Calu3 (cell line): ENCODE measurements at regions of chr1 and their contacts with region 1.

Region 1: DNA sequence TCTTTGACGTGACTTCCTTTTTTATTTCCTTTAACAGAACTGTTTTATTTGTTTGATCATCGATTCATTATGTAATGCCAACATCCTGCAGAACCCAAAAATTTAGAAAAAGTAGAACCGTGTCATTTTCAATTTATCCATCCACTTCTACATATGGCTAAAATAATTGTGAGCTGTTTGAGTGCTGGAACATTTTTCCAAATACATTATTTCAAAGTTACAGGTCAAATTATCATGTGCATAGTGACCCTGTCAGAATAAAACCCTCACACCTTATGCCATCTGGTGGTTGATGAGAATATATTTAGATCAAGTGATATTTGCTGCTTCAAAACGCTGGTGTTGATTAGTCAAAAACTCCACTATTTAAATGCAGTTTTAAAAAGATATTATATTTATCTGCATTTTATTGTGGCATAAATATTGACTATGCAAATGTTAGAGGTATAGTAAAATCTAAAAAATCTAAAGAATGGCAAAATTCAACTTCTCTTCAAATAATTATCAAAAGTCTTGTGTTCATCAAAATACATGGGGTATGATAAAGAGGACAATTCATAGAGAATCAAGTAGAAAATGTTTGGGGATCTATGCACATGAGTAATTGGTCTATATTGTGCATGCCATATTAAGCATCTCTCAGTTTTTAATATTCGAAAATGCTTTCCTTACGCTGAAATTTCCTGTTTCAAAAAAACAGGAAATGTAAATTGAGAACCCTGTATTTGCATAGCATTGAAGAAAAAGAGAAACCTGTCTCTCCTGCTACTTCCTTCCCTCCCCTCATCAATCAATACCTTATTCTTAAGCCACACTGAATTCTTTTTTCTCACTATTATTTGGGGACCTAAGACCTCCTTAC is 39.7 kb downstream of the UBE2U start:
- DNase-seq: no peak
- H3K4me3 Mint-ChIP-seq: peak overlapping the region; percentile 12
- H3K27ac Mint-ChIP-seq: peak overlapping the region; percentile 18
- H3K4me1 Mint-ChIP-seq: peaks cover 20% of the 10 kb centered on the region
- H3K27me3 Mint-ChIP-seq: no peaks in the 10 kb centered on the region
- CTCF ChIP-seq: peak; percentile 41

Region 2: DNA sequence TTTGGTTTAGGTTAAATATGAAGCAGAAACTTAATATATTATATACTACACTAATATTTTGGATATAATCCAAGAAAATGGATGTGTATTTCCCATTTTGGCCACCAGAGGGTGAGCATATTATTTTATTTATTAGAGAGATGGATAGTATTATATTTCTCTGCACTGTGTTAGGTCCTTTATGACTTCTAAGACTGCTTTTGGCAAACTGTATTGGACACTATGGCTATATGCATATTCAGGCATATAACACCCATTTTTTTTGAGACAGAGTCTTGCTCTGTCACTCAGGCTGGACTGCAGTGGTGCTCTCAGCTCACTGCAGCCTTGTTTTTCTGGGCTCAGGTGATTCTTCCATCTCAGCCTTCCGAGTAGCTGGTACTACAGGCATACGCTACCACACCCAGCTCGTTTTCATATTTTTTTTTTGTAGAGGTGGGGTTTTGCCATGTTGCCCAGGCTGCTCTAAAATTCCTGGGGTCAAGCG is 667.7 kb before region 1 on chr1:
- CTCF ChIA-PET with region 1: interaction called, 5 read pairs
- intact Hi-C with region 1: loop called (anchors 1 kb)
- DNase-seq: peak; percentile 35
- H3K4me3 Mint-ChIP-seq: no peak overlapping the region
- H3K27ac Mint-ChIP-seq: no peak overlapping the region
- H3K4me1 Mint-ChIP-seq: no peaks in the 10 kb centered on the region
- H3K27me3 Mint-ChIP-seq: no peaks in the 10 kb centered on the region
- CTCF ChIP-seq: peak; percentile 51

Region 3: DNA sequence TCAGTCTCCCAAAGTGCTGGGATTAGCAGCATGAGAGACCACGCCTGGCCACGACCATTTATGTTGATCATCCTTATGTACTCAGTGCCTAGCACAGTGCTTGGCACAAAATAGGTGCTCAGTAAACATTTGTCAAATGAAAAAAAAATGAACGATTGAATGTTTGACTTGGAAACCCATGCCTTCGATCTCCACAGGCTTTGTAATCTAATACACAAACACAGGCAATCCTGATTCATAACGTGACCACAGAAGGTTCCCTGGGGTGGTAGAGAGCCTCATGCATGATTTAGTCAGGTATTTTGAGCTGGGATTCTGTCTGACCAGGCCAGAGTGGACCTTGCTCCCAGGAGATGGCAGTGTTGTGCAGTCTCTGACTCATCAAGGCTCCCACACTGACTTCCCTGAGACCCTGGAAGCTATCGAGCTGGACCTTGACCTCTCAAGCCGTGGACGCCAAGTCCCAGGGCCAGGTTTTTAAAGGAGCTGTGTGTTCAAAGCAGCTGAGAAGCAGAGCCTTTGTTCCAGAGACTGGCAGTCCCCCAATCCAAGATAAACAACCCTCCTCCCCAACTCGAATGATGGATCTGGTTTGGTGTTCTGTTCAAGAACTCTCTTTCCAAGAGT is 568.8 kb before region 1 on chr1:
- CTCF ChIA-PET with region 1: interaction called, 7 read pairs
- intact Hi-C with region 1: loop called (anchors 1 kb)
- DNase-seq: peak; percentile 89
- H3K4me3 Mint-ChIP-seq: peak overlapping the region; percentile 2
- H3K27ac Mint-ChIP-seq: peak overlapping the region; percentile 62
- H3K4me1 Mint-ChIP-seq: peaks cover 53% of the 10 kb centered on the region
- H3K27me3 Mint-ChIP-seq: no peaks in the 10 kb centered on the region
- CTCF ChIP-seq: peak; percentile 69

Region 4: DNA sequence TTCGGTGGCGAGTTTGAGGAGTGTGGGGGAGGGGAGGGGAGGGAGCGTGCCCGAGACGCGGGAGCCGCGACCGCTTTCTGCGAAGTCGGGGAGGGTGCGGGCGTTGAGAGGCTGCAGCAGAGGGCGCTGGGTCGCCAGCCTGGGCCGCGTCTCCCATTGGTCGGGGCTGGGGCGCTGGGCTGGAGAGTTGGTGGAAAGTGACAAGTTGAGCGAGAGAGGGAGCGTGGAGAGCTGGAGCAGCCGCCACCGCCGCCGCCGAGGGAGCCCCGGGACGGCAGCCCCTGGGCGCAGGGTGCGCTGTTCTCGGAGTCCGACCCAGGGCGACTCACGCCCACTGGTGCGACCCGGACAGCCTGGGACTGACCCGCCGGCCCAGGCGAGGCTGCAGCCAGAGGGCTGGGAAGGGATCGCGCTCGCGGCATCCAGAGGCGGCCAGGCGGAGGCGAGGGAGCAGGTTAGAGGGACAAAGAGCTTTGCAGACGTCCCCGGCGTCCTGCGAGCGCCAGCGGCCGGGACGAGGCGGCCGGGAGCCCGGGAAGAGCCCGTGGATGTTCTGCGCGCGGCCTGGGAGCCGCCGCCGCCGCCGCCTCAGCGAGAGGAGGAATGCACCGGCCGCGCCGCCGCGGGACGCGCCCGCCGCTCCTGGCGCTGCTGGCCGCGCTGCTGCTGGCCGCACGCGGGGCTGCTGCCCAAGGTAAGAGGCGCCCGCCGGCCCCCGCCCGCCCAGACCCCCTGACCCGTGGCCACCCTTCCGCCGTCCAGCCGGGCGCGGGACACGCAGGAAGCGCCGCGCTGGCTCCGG is 469.1 kb before region 1 on chr1 and contains the start of gene ROR1:
- CTCF ChIA-PET with region 1: interaction called, 3 read pairs
- intact Hi-C with region 1: loop called (anchors 2 kb)
- DNase-seq: peak; percentile 94
- H3K4me3 Mint-ChIP-seq: peak within 1 kb of the TSS; percentile 99
- H3K27ac Mint-ChIP-seq: peak within 1 kb of the TSS; percentile 79
- H3K4me1 Mint-ChIP-seq: peaks cover 58% of the 10 kb centered on the region
- H3K27me3 Mint-ChIP-seq: no peaks in the 10 kb centered on the region
- CTCF ChIP-seq: peak; percentile 81
- total RNA-seq, gene ROR1: 24.5 and 33.8 TPM in 2 replicates

Region 5: GRCh38 chr1:64136752-64137411 is 106.2 kb before region 1 on chr1:
- CTCF ChIA-PET with region 1: no interaction called
- intact Hi-C with region 1: loop called (anchors 2 kb)
- DNase-seq: peak; percentile 82
- H3K4me3 Mint-ChIP-seq: no peak overlapping the region
- H3K27ac Mint-ChIP-seq: no peak overlapping the region
- H3K4me1 Mint-ChIP-seq: peaks cover 20% of the 10 kb centered on the region
- H3K27me3 Mint-ChIP-seq: no peaks in the 10 kb centered on the region
- CTCF ChIP-seq: peak; percentile 86

Region 6: GRCh38 chr1:64268653-64269557 is 25.8 kb after region 1 on chr1:
- CTCF ChIA-PET with region 1: no interaction called
- intact Hi-C with region 1: no loop called
- DNase-seq: peak; percentile 78
- H3K4me3 Mint-ChIP-seq: no peak overlapping the region
- H3K27ac Mint-ChIP-seq: no peak overlapping the region
- H3K4me1 Mint-ChIP-seq: no peaks in the 10 kb centered on the region
- H3K27me3 Mint-ChIP-seq: peaks cover 1% of the 10 kb centered on the region
- CTCF ChIP-seq: peak; percentile 85